OCI-LY7 (cell line): ENCODE measurements at regions of chr7 and their contacts with region 1.

Region 1: DNA sequence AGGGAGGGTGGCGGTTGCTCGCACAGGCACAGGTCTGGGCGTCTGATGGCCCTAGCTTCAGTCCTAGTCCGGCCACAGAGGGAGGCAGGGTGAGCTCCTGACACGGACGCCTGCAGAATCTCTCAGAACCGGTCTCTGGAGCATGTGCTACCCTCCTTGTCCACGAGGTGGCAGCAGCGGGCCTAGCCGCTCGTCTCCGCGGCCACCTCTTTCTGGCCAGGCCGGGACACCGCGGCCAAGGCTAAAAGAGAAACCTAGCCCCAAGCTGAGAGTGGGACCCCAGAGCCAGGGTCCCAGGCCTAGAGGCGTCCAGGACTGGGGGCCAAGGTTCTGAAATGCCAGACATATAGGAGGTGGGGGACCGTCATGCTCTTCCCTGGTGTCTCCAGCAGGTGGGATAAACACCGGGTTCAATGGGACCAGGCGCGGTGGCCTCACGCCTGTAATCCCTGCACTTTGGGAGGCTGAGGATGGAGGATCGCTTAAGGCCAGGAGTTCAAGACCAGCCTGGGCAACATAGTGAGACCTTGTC is 3.2 kb upstream of the LAT2 start:
- DNase-seq: peak; percentile 80
- H3K4me3 ChIP-seq: no peak overlapping the region
- H3K27ac ChIP-seq: no peak overlapping the region
- H3K4me1 ChIP-seq: peaks cover 49% of the 10 kb centered on the region
- CTCF ChIP-seq: peak; percentile 99

Region 2: GRCh38 chr7:73879977-73880681 is 326.5 kb before region 1 on chr7:
- CTCF ChIA-PET with region 1: no interaction called
- POLR2A ChIA-PET with region 1: no interaction called
- intact Hi-C with region 1: no loop called
- DNase-seq: no peak
- H3K4me3 ChIP-seq: no peak overlapping the region
- H3K27ac ChIP-seq: no peak overlapping the region
- H3K4me1 ChIP-seq: no peaks in the 10 kb centered on the region
- CTCF ChIP-seq: no peak

Region 3: DNA sequence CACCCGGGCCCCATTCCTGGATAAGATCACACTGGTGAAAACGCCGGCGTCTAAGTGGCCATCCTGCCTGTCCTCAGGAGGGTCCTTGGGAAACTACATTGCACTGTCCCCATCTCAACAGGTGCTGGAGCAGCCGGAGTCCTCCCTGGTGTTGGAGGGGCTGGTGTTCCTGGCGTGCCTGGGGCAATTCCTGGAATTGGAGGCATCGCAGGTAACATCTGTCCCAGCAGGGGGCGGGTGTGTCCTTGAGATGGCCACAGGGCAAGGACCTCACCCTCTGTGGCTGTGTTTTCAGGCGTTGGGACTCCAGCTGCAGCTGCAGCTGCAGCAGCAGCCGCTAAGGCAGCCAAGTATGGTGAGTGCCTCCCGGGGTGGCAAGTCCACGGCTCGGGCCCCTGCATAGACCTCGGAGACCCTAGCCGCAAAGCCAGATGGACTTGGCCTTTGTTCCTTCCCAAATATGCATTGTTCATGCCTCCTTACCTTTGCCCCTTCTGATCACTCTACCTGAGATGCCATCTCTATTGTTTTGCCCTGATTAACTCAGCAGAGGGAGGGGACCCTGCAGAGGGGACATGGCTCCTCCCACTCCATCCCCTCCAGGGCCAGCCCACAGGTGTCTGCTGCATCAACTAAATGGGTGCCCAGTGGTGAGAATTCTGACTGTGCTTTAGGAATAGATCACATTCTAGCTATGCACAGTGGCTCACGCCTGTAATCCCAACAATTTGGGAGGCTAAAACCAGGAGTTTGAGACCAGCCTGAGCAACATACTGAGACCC is 154.8 kb before region 1 on chr7:
- CTCF ChIA-PET with region 1: no interaction called
- POLR2A ChIA-PET with region 1: no interaction called
- intact Hi-C with region 1: loop called (anchors 1 kb)
- DNase-seq: peak; percentile 52
- H3K4me3 ChIP-seq: no peak overlapping the region
- H3K27ac ChIP-seq: no peak overlapping the region
- H3K4me1 ChIP-seq: no peaks in the 10 kb centered on the region
- CTCF ChIP-seq: peak; percentile 56; the same call in 1 of the 2 replicates

Region 4: DNA sequence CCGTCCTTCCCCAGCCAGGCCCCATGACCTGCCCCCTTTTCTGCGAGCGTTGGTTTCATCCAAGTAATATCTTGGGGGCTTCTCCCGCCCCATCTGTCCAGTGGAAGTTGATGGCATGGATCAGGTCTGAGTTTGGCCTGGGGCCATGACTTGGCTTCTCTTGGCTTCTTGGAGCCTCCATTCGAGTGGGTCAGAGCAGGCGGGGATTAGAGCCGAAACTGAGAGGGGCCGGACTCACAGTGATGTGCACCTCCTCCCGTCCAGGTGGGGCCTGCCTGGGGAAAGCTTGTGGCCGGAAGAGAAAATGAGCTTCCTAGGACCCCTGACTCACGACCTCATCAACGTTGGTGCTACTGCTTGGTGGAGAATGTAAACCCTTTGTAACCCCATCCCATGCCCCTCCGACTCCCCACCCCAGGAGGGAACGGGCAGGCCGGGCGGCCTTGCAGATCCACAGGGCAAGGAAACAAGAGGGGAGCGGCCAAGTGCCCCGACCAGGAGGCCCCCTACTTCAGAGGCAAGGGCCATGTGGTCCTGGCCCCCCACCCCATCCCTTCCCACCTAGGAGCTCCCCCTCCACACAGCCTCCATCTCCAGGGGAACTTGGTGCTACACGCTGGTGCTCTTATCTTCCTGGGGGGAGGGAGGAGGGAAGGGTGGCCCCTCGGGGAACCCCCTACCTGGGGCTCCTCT is 138.1 kb before region 1 on chr7:
- CTCF ChIA-PET with region 1: no interaction called
- POLR2A ChIA-PET with region 1: interaction called, 11 read pairs
- intact Hi-C with region 1: loop called (anchors 1 kb)
- DNase-seq: no peak
- H3K4me3 ChIP-seq: no peak overlapping the region
- H3K27ac ChIP-seq: no peak overlapping the region
- H3K4me1 ChIP-seq: peaks cover 12% of the 10 kb centered on the region
- CTCF ChIP-seq: no peak

Region 5: GRCh38 chr7:74254129-74254857 is 47.6 kb after region 1 on chr7 and contains the start of gene RFC2:
- CTCF ChIA-PET with region 1: no interaction called
- POLR2A ChIA-PET with region 1: interaction called, 6 read pairs
- intact Hi-C with region 1: loop called (anchors 1 kb)
- DNase-seq: peak; percentile 97
- H3K4me3 ChIP-seq: peak within 1 kb of the TSS; percentile 83
- H3K27ac ChIP-seq: peak within 1 kb of the TSS; percentile 63
- H3K4me1 ChIP-seq: peaks cover 45% of the 10 kb centered on the region
- CTCF ChIP-seq: no peak
- total RNA-seq, gene RFC2: 71.3 and 77.4 TPM in 2 replicates

Region 6: DNA sequence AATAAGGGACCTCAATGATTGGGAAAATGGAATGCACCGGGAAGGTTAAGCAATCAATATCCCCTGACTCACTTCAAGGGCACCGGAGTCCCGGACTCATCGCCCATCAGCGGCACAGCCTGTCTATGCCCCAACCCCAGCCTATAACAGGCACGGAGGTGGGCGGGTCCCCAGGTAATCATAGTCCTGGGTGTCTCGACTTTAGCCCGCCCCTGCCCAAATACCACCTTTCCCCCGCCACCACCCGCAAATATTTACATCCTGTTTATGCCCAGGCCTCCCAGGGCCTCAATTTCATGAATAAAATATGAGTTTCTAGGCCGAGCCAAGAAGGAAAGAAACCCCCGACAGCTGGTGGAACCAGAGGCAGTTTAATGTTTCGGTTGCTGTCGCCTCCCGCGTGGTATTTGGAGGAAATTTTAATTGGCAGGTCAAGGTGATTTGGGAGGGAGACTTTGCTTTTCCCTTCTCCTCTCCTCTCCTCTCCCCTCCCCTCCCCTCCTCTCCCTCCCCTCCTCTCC is 63.2 kb after region 1 on chr7:
- CTCF ChIA-PET with region 1: interaction called, 6 read pairs
- POLR2A ChIA-PET with region 1: interaction called, 5 read pairs
- intact Hi-C with region 1: loop called (anchors 2 kb)
- DNase-seq: peak; percentile 83
- H3K4me3 ChIP-seq: peak overlapping the region; percentile 65
- H3K27ac ChIP-seq: no peak overlapping the region
- H3K4me1 ChIP-seq: peaks cover 65% of the 10 kb centered on the region
- CTCF ChIP-seq: no peak